Endothelial cell of umbilical vein (primary cell): ENCODE measurements at regions of chr9 and their contacts with region 1.

Region 1: DNA sequence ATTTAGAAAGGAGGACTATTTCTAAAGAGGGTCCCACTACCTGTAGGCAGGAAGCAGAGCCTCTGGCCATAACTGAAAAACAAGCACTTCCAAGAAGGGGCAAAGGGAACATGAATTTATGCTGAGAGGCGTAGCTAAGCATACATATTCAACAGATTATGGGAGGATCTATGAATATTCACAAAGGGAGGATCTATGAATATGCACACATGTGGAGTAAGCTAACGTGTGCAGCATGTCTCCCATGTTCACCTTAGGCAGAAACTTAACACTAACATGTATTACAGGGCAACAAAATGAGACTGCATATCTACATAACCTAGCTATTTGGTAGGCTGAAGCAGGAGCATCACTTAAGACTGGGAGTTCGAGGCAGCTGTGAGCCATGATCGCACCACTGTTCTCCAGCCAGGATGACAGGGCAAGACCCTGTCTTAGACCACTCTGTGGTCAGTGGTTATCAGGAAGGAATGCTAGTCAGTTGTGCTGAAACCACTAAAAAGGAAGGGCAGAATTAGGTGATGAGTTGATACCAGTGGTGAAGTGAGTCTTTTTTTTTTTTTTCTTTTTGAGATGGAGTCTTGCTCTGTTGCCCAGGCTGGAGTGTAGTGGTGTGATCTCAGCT is 20.8 kb downstream of the FXN start:
- DNase-seq: no peak
- H3K4me3 ChIP-seq: no peak overlapping the region
- H3K27ac ChIP-seq: no peak overlapping the region
- H3K4me1 ChIP-seq: peaks cover 3% of the 10 kb centered on the region
- H3K27me3 ChIP-seq: no peaks in the 10 kb centered on the region
- CTCF ChIP-seq: no peak
- POLR2A ChIP-seq: no peak

Region 2: DNA sequence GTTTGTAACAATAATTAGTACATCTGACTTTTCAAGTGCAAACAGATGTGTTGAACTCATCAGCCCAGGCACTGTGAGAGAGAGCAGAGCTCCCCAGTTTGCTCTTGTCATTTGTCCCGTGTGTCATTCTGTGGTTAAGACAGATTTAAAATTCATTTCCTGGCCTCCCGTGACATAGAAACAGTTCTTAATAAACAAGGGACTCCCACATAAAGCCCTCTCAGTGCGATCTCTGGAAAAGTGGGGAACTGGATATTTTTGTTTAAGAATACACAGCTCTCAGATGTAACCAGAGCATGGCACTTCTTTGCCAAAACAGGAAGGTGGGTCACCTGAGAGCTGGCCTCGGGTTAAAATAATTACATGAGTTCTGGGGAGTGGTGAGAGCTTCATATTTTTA is 101.0 kb before region 1 on chr9:
- CTCF ChIA-PET with region 1: no interaction called
- POLR2A ChIA-PET with region 1: no interaction called
- dilution Hi-C with region 1: no loop called
- intact Hi-C with region 1: no loop called
- DNase-seq: no peak
- H3K4me3 ChIP-seq: no peak overlapping the region
- H3K27ac ChIP-seq: no peak overlapping the region
- H3K4me1 ChIP-seq: no peaks in the 10 kb centered on the region
- H3K27me3 ChIP-seq: no peaks in the 10 kb centered on the region
- CTCF ChIP-seq: no peak
- POLR2A ChIP-seq: no peak

Region 3: DNA sequence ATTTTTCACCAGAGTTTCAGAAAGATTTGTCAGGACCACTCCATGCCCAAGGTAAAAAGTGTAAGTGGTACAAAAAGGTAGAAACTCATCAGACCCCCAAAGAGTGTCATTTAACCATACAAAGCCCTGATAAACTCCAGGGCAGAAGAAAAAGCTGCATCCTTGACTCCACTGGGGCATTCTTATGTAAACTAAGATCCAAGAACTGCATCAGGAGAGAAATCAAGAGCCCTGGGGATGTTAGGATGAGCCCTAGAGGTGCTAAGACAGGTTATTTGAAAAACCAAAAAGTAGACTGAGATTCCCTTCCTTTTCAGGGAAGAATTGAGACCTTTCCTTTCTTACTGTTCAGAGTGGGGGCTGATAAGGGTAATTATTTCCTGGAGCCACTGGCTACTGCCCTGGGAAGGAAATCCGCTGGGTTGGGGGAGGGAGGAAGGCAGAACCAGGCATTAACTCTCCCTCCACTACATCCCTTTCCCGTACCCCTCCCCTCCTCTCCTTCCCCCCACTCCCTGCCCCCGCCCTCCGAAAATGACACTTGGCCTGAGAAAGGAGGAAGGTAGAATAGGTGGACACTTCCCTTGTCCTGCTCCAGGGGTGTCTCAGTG is 33.9 kb after region 1 on chr9:
- CTCF ChIA-PET with region 1: no interaction called
- POLR2A ChIA-PET with region 1: no interaction called
- dilution Hi-C with region 1: no loop called
- intact Hi-C with region 1: loop called (anchors 2 kb)
- DNase-seq: no peak
- H3K4me3 ChIP-seq: no peak overlapping the region
- H3K27ac ChIP-seq: peak overlapping the region; percentile 7
- H3K4me1 ChIP-seq: peaks cover 32% of the 10 kb centered on the region
- H3K27me3 ChIP-seq: no peaks in the 10 kb centered on the region
- CTCF ChIP-seq: no peak
- POLR2A ChIP-seq: no peak

Region 4: GRCh38 chr9:69143291-69143690 is 87.0 kb after region 1 on chr9:
- CTCF ChIA-PET with region 1: interaction called, 71 read pairs
- POLR2A ChIA-PET with region 1: no interaction called
- dilution Hi-C with region 1: no loop called
- intact Hi-C with region 1: no loop called
- DNase-seq: peak; percentile 88
- H3K4me3 ChIP-seq: peak overlapping the region in 1 of 3 experiments; percentile 41
- H3K27ac ChIP-seq: peak overlapping the region; percentile 74
- H3K4me1 ChIP-seq: peaks cover 24% of the 10 kb centered on the region
- H3K27me3 ChIP-seq: no peaks in the 10 kb centered on the region
- CTCF ChIP-seq: no peak
- POLR2A ChIP-seq: no peak

Region 5: GRCh38 chr9:69174616-69175463 is 118.5 kb after region 1 on chr9:
- CTCF ChIA-PET with region 1: interaction called, 10 read pairs
- POLR2A ChIA-PET with region 1: no interaction called
- dilution Hi-C with region 1: loop called (anchors 10 kb)
- intact Hi-C with region 1: no loop called
- DNase-seq: peak; percentile 57
- H3K4me3 ChIP-seq: peak overlapping the region; percentile 60 to 73 (median 64)
- H3K27ac ChIP-seq: peak overlapping the region; percentile 81
- H3K4me1 ChIP-seq: peaks cover 70% of the 10 kb centered on the region
- H3K27me3 ChIP-seq: no peaks in the 10 kb centered on the region
- CTCF ChIP-seq: no peak
- POLR2A ChIP-seq: no peak

Region 6: GRCh38 chr9:69199769-69200470 is 143.6 kb after region 1 on chr9:
- CTCF ChIA-PET with region 1: interaction called, 281 read pairs
- POLR2A ChIA-PET with region 1: no interaction called
- dilution Hi-C with region 1: no loop called
- intact Hi-C with region 1: no loop called
- DNase-seq: no peak
- H3K4me3 ChIP-seq: no peak overlapping the region
- H3K27ac ChIP-seq: no peak overlapping the region
- H3K4me1 ChIP-seq: no peaks in the 10 kb centered on the region
- H3K27me3 ChIP-seq: no peaks in the 10 kb centered on the region
- CTCF ChIP-seq: no peak
- POLR2A ChIP-seq: no peak

Region 7: GRCh38 chr9:69307446-69308216 is 251.3 kb after region 1 on chr9:
- CTCF ChIA-PET with region 1: no interaction called
- POLR2A ChIA-PET with region 1: no interaction called
- dilution Hi-C with region 1: no loop called
- intact Hi-C with region 1: no loop called
- DNase-seq: peak; percentile 54
- H3K4me3 ChIP-seq: no peak overlapping the region
- H3K27ac ChIP-seq: no peak overlapping the region
- H3K4me1 ChIP-seq: no peaks in the 10 kb centered on the region
- H3K27me3 ChIP-seq: peaks cover 2 to 7% of the 10 kb centered on the region in 2 experiments
- CTCF ChIP-seq: no peak
- POLR2A ChIP-seq: no peak

Region 8: DNA sequence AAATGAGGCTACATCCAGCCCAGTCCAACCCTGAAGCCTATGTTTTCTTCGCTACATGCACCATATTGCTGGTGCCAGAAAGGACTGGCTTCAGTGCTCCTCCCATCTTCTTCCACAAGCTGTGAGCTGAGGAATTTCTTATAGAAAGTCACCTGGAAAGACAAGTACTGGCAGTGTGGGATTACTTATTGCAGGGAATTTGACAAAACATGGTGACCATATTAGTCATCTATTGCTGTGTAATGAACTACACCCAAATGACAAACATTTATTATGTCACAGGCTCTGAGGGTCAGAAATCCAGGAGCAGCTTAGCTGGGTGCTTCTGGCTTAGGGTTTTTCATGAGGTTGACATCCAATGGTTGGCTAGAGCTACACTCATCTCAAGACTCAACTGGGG is 344.2 kb after region 1 on chr9:
- CTCF ChIA-PET with region 1: no interaction called
- POLR2A ChIA-PET with region 1: no interaction called
- dilution Hi-C with region 1: no loop called
- intact Hi-C with region 1: no loop called
- DNase-seq: no peak
- H3K4me3 ChIP-seq: no peak overlapping the region
- H3K27ac ChIP-seq: no peak overlapping the region
- H3K4me1 ChIP-seq: no peaks in the 10 kb centered on the region
- H3K27me3 ChIP-seq: peaks cover 0 to 7% of the 10 kb centered on the region in 2 experiments
- CTCF ChIP-seq: no peak
- POLR2A ChIP-seq: no peak